ENCODE measurements at regions of chr1 and their contacts with region 1.

Region 1: DNA sequence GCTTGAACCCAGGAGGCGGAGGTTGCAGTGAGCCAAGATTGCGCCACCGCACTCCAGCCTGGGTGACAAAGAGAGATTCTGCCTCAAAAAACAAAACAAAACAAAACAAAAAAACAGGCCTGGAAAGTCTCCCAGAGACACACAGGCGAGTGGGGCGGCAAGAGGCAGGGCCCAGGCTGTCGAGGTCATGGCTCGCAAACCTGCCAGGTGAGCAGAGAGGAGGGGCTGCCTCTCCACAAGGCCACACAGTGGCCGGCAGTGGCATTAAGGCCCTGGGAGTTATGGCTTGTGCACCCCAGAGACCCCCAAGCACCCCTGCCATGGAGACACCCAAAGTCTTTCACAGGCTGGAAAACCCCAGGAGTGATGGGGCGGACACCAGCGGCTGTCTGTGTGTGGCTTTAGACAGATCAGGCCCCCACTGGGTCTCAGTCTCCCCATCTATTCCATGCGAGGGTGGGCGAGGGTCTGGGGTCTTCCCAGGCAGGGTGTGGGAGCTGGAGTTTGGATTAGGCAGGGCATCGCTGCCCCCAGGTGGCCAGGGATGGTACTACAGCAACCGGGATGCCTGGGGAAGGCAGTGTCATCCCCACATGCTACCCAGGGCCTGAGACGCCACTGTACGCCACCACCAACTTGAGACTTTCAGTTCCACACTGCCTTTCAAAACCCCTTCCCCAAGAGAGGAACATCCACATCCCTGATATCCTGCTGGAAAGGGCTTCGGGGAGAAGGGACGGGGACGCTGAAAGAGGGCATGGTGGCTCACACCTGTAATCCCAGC is 7.3 kb upstream of the CTRC start:
- DNase-seq: peak; percentile 87
- ATAC-seq: peak; percentile 60

Region 2: DNA sequence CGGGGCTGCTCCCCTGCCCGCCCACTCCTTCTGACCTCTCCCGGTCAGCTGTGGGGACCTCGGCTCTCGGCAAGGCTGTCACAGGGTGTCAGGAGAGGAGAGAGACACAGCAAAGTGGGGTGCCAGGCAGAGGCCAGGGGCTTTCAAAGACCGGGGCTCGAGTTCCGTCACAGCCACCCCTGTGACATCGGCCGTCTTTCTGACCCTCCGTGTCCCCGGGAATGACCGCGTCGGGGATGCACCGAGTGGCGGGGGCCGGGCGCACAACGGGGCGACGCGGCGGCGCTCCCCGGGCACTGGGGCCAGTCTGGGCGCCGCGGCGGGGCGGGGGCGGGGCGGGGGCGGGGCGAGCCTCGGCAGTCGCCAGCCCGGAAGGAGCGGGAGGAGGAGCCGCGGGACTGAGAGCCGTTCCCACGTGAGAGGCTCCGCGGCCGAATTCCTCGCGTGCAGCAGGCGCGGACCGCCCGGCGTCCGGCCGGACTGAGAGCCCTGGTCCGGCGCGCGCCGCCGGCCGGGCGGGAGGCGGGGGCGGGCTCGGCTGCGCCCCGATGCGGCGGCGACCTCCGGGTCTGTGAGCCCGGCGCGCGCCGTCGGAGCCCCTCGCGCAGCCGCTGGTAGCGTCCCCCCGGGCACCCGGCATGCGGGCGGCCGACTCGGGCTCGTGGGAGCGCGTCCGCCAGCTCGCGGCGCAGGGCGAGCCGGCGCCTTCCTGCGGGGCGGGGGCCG is 507.1 kb before region 1 on chr1:
- intact Hi-C with region 1: no loop called
- DNase-seq: peak; percentile 76
- ATAC-seq: peak; percentile 77

Region 3: DNA sequence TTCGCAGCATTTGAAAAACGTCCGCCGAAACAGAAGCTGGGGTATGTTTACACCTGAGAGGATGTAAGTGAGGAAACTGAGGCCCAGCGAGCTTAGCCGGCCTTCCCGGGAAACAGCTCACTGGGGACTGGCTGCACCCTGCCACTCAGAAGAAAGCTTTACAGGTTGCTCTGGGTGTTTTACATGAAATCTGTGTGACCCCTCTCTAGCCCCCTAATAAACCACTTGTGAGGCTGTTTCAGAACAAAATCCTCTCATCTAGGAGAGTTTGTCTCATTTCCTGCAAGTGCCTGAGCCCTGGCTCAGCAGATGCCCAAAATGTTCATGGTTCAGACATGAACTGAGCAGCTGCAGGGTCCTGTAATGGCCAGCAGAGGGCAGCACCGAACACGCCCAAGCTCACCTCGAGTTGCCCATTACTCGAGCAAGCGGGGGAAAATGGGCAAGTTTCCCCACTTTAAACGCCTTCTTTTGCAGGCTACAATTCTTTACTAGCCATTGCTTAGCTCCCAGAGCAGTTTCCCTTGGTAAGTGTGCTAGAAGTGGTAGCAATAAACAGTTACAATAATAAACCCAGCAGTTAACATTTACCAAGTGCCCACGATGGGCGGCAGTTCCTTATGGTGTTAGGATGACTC is 107.5 kb before region 1 on chr1:
- intact Hi-C with region 1: loop called (anchors 5 kb)
- DNase-seq: peak; percentile 88
- ATAC-seq: peak; percentile 80

Region 4: DNA sequence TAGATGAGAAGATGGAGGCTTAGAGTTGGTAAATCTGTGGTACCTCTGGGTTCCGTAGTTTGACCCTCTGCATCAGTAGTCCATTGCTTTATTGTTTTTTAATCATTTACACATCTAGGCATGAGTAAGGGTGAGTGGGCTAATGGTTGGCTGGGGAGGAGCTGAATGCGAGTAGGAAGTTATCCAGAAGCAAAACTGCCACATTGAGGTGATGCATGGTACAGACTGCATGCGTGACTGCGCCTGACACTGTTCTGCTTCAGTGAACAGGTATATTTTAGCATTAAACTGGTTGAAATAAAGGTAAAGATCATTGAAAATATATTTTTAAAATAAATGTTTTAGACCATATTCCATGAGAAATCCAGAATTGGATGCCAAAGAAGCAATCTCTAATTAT is 100.0 kb after region 1 on chr1:
- intact Hi-C with region 1: no loop called
- DNase-seq: no peak
- ATAC-seq: no peak